ENCODE measurements at regions of chr17 and their contacts with region 1.

Region 1: GRCh38 chr17:32319548-32319905 is 22.4 kb downstream of the C17orf75 start:
- DNase-seq: peak; percentile 86
- ATAC-seq: peak; percentile 94

Region 2: GRCh38 chr17:32253117-32253611 is 66.4 kb before region 1 on chr17:
- intact Hi-C with region 1: loop called (anchors 5 kb)
- DNase-seq: peak; percentile 84
- ATAC-seq: peak; percentile 95

Region 3: DNA sequence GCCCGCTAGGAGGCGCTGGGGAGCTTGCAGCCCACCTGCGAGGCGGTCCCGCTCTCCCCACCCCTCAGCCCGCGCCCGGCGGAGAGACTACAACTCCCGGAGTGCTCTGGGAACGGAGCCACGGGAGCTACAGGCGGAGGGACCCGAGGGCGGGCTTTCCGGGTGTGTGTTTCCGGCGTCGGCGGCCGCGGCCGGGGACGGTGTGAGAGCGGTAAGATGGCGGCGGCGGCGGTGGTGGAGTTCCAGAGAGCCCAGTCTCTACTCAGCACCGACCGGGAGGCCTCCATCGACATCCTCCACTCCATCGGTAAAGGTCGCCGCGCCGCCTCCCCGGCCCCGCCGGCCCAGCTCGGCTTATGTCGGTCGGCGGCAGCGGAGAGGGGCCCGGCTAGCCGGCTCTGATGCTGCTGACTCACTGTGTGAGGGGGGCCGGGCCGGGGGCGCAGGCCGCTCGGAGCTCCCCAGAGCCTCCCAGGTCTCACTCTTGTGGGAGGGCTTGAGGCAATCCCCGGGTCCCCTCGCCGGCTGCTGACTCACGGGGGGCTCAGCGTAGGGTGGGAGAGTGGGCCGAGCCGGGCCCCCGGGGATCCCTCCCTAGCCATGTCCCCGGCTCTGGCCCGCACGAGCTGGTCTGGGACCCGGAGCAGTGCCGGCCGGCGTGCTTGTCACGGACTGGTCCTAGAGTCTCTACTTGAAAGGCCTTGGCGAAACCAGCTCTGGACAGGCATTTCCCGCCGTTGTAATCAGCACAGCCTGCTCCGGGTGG is 125.0 kb after region 1 on chr17 and contains the start of gene PSMD11:
- intact Hi-C with region 1: no loop called
- DNase-seq: peak; percentile 99
- ATAC-seq: peak; percentile 98
- total RNA-seq, gene PSMD11: 67.8 TPM

Region 4: DNA sequence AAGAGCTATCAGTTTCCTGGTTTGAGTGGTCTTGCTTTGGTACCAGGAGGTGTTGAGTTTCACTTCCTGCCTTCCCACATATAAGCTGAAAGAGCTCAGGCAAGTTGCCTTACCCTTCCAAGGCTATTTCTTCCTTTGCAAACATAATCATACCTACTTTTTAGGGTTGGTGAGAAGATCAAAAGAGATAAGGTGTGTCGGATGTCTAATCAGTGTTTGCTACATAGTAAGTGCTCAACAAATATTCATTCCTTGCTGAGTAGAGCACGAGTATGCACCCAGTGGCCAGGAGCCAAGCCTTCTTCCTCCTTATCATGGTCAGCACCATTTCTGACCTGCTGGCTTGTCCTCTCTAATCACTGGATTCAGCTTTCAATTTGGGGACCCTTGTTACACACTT is 595.7 kb after region 1 on chr17:
- intact Hi-C with region 1: no loop called
- DNase-seq: no peak
- ATAC-seq: no peak